CD4-positive, alpha-beta T cell (primary cell): ENCODE measurements at regions of chr3 and their contacts with region 1.

Region 1: DNA sequence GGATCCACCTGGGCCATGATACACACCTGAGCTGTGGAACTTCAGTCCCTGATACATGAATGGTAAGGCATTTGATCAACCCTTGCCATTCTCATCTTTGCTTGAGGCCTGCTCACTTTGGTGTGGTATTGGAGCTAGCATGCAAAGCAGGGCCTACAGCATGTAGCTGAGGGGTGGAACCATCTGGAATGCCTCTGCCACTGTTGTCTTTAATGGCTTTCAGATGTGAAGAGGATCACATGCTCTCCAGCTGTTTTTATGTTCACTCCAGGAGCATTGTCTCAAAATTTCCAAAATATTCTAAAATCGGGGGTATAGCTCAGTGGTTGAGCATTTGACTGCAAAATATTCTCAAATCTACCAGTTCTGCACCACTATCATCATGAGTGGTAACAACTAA is 64.4 kb upstream of the PHLDB2 start:
- DNase-seq: no peak
- ATAC-seq: no peak
- H3K4me3 ChIP-seq: no peak overlapping the region
- H3K4me3 Mint-ChIP-seq: no peak overlapping the region
- H3K27ac ChIP-seq: no peak overlapping the region
- H3K27ac Mint-ChIP-seq: no peak overlapping the region
- H3K4me1 ChIP-seq: no peaks in the 10 kb centered on the region
- H3K4me1 Mint-ChIP-seq: no peaks in the 10 kb centered on the region
- H3K27me3 ChIP-seq: no peaks in the 10 kb centered on the region
- H3K27me3 Mint-ChIP-seq: no peaks in the 10 kb centered on the region
- CTCF ChIP-seq: no peak

Region 2: GRCh38 chr3:110420158-110420641 is 1374.5 kb before region 1 on chr3:
- CTCF ChIA-PET with region 1: no interaction called
- POLR2A ChIA-PET with region 1: no interaction called
- intact Hi-C with region 1: no loop called
- DNase-seq: no peak
- ATAC-seq: no peak
- H3K4me3 ChIP-seq: no peak overlapping the region
- H3K4me3 Mint-ChIP-seq: no peak overlapping the region
- H3K27ac ChIP-seq: no peak overlapping the region
- H3K27ac Mint-ChIP-seq: no peak overlapping the region
- H3K4me1 ChIP-seq: no peaks in the 10 kb centered on the region
- H3K4me1 Mint-ChIP-seq: no peaks in the 10 kb centered on the region
- H3K27me3 ChIP-seq: no peaks in the 10 kb centered on the region
- H3K27me3 Mint-ChIP-seq: peaks cover 2% of the 10 kb centered on the region
- CTCF ChIP-seq: no peak

Region 3: GRCh38 chr3:111767756-111768445 is 26.8 kb before region 1 on chr3:
- CTCF ChIA-PET with region 1: no interaction called
- POLR2A ChIA-PET with region 1: no interaction called
- intact Hi-C with region 1: loop called in 1 of 2 experiments (anchors 1 kb)
- DNase-seq: no peak
- ATAC-seq: no peak
- H3K4me3 ChIP-seq: no peak overlapping the region
- H3K4me3 Mint-ChIP-seq: no peak overlapping the region
- H3K27ac ChIP-seq: no peak overlapping the region
- H3K27ac Mint-ChIP-seq: no peak overlapping the region
- H3K4me1 ChIP-seq: no peaks in the 10 kb centered on the region
- H3K4me1 Mint-ChIP-seq: no peaks in the 10 kb centered on the region
- H3K27me3 ChIP-seq: no peaks in the 10 kb centered on the region
- H3K27me3 Mint-ChIP-seq: no peaks in the 10 kb centered on the region
- CTCF ChIP-seq: no peak

Region 4: GRCh38 chr3:111831840-111832239 is 37.1 kb after region 1 on chr3:
- CTCF ChIA-PET with region 1: no interaction called
- POLR2A ChIA-PET with region 1: no interaction called
- intact Hi-C with region 1: no loop called
- DNase-seq: peak in 5 of 14 experiments; percentile 1 to 43 (median 33)
- ATAC-seq: peak; percentile 44
- H3K4me3 ChIP-seq: no peak overlapping the region
- H3K4me3 Mint-ChIP-seq: no peak overlapping the region
- H3K27ac ChIP-seq: no peak overlapping the region
- H3K27ac Mint-ChIP-seq: no peak overlapping the region
- H3K4me1 ChIP-seq: peaks cover 4% of the 10 kb centered on the region
- H3K4me1 Mint-ChIP-seq: peaks cover 10% of the 10 kb centered on the region
- H3K27me3 ChIP-seq: no peaks in the 10 kb centered on the region
- H3K27me3 Mint-ChIP-seq: no peaks in the 10 kb centered on the region
- CTCF ChIP-seq: no peak